Natural killer cell (primary cell): ENCODE measurements at regions of chr6 and their contacts with region 1.

Region 1: GRCh38 chr6:45421709-45422502 is 44.2 kb upstream of the SUPT3H start:
- DNase-seq: peak; percentile 42 to 72
- ATAC-seq: peak; percentile 43 to 53 (median 51)
- H3K4me3 ChIP-seq: peak overlapping the region; percentile 94
- H3K4me3 Mint-ChIP-seq: peak overlapping the region; percentile 95
- H3K27ac ChIP-seq: peak overlapping the region; percentile 50
- H3K27ac Mint-ChIP-seq: peak overlapping the region; percentile 66 to 87
- H3K4me1 ChIP-seq: peaks cover 46% of the 10 kb centered on the region
- H3K4me1 Mint-ChIP-seq: peaks cover 21 to 56% of the 10 kb centered on the region in 2 donors
- H3K27me3 ChIP-seq: peaks cover 13% of the 10 kb centered on the region
- H3K27me3 Mint-ChIP-seq: peaks cover 40 to 42% of the 10 kb centered on the region in 2 donors
- CTCF ChIP-seq: no peak

Region 2: GRCh38 chr6:45377554-45378333 is 44.2 kb before region 1 on chr6 and contains the start of gene SUPT3H:
- intact Hi-C with region 1: loop called (anchors 2 kb)
- DNase-seq: peak; percentile 90 to 97
- ATAC-seq: peak; percentile 82 to 94 (median 88)
- H3K4me3 ChIP-seq: peak within 1 kb of the TSS; percentile 93
- H3K4me3 Mint-ChIP-seq: peak within 1 kb of the TSS; percentile 96
- H3K27ac ChIP-seq: peak within 1 kb of the TSS; percentile 99
- H3K27ac Mint-ChIP-seq: peak within 1 kb of the TSS; percentile 93 to 98
- H3K4me1 ChIP-seq: peaks cover 4% of the 10 kb centered on the region
- H3K4me1 Mint-ChIP-seq: peaks cover 24% of the 10 kb centered on the region in 2 donors
- H3K27me3 ChIP-seq: no peaks in the 10 kb centered on the region
- H3K27me3 Mint-ChIP-seq: no peaks in the 10 kb centered on the region
- CTCF ChIP-seq: no peak
- total RNA-seq, gene SUPT3H: 7.3 to 10.9 (median 9.9) TPM

Region 3: DNA sequence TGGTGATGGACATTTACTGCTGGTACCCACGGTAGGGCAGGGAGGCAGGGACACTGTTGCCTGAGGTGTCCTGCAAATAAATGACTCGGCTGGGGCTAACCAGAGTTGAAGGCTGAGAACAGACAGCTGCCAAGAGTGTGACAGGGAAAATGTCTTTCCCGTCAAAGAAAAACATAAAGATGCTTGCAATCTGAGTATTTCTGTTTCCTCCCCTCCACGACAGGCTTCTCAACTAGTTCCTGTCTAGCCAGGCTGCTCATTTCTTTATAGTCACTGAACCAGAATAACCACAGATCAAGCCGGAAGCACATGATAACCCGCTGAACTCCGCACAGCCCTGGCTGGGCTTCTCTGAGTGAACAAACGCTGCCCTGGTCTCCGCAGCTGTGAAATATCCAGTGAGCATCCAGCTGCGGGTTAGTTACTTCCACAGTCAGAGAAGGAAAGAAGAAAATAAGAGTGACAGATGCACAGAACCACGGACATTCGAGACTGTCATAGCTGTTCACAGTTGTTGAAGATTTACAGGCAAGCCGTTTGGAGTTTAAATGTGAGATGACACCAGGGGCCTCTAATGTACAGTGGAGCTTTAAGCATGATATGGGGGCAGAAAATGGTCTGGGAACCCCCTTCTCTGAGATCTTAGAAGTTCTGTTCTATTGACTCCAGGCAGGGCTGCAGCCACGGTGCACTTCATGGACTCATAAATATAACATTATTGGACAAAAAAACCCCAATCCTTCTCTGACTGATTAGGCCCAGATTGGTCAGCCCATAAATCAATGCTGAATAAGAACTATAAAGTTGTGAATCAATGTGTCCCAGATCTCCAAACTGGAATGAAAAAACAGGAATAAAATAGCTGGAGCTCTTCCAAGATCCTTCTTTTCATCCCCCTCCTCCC is 255.7 kb after region 1 on chr6:
- intact Hi-C with region 1: loop called (anchors 5 kb)
- DNase-seq: peak; percentile 39 to 69
- ATAC-seq: peak; percentile 73 to 90 (median 85)
- H3K4me3 ChIP-seq: no peak overlapping the region
- H3K4me3 Mint-ChIP-seq: peak overlapping the region; percentile 81
- H3K27ac ChIP-seq: peak overlapping the region; percentile 51
- H3K27ac Mint-ChIP-seq: peak overlapping the region; percentile 84 to 88
- H3K4me1 ChIP-seq: peaks cover 38% of the 10 kb centered on the region
- H3K4me1 Mint-ChIP-seq: peaks cover 32 to 42% of the 10 kb centered on the region in 2 donors
- H3K27me3 ChIP-seq: no peaks in the 10 kb centered on the region
- H3K27me3 Mint-ChIP-seq: no peaks in the 10 kb centered on the region
- CTCF ChIP-seq: no peak